Activated CD4-positive, alpha-beta T cell treated with anti-CD3 and anti-CD28 coated beads, Interleukin-2, amount 10 ng/mL, durations not matched to agents 24 days and 14 days (primary cell): ENCODE measurements at regions of chr16 and their contacts with region 1.

Region 1: DNA sequence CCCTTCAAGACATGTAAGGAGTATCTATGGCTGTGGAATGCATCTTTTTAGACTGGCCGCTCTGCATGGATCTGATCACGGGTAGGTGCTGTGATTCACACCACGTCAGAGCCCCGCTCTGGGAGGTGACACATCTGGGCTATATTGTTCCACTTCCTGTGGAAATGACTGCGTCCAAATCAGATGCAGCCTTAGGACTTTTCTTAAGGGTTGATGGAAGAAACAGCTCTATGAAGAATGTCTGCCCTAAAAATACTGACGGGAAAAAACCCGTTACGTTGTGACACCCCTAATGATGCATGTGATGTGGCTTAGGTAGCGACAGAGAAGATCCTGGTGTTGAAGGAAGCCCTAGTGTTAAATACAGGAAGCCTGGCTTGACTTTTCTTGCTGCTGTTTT is 12.2 kb downstream of the BANP start:
- DNase-seq: peak; percentile 87
- H3K4me3 Mint-ChIP-seq: peak overlapping the region; percentile 55
- H3K27ac Mint-ChIP-seq: peak overlapping the region; percentile 89
- H3K4me1 Mint-ChIP-seq: peaks cover 57% of the 10 kb centered on the region
- H3K27me3 Mint-ChIP-seq: no peaks in the 10 kb centered on the region

Region 2: DNA sequence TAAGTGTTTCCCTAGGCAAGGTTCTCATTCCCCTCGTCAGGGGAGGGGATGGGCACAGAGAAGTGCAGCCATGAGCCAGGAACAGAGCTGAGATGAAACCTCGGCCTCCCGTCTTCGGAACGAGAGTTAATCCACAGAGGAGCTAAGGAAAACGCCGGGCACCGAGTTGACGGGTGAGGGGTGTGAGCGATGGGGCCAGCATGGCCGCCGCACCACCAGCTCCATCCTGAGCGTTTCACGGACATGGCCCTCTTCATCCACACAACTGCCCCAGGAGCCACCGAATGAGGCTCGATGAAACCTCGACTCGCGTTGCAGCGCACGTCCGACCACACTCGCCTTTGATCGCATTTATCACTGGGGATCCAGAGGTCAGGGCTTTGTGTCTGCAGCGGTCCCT is 48.6 kb before region 1 on chr16:
- intact Hi-C with region 1: no loop called
- DNase-seq: no peak
- H3K4me3 Mint-ChIP-seq: no peak overlapping the region
- H3K27ac Mint-ChIP-seq: no peak overlapping the region
- H3K4me1 Mint-ChIP-seq: peaks cover 4% of the 10 kb centered on the region
- H3K27me3 Mint-ChIP-seq: no peaks in the 10 kb centered on the region

Region 3: GRCh38 chr16:87976665-87977064 is 13.3 kb after region 1 on chr16:
- intact Hi-C with region 1: loop called (anchors 2 kb)
- DNase-seq: no peak
- H3K4me3 Mint-ChIP-seq: no peak overlapping the region
- H3K27ac Mint-ChIP-seq: peak overlapping the region; percentile 2
- H3K4me1 Mint-ChIP-seq: peaks cover 33% of the 10 kb centered on the region
- H3K27me3 Mint-ChIP-seq: no peaks in the 10 kb centered on the region